Common myeloid progenitor, CD34-positive (primary cell): ENCODE measurements at regions of chr1 and their contacts with region 1.

Region 1: GRCh38 chr1:152459596-152460528 is 45.8 kb upstream of the CRNN start:
- DNase-seq: peak; percentile 80 to 86 (median 82)
- H3K4me3 ChIP-seq: peak overlapping the region in 4 of 7 experiments; percentile 5 to 63 (median 46)
- H3K27ac ChIP-seq: peak overlapping the region; percentile 40 to 58
- H3K4me1 ChIP-seq: peaks cover 0 to 8% (median 4%) of the 10 kb centered on the region in 4 experiments
- H3K27me3 ChIP-seq: no peaks in the 10 kb centered on the region

Region 2: GRCh38 chr1:152398812-152399698 is 60.8 kb before region 1 on chr1:
- CTCF ChIA-PET with region 1: interaction called, 26 read pairs
- POLR2A ChIA-PET with region 1: no interaction called
- DNase-seq: peak; percentile 11 to 42 (median 36)
- H3K4me3 ChIP-seq: no peak overlapping the region
- H3K27ac ChIP-seq: no peak overlapping the region
- H3K4me1 ChIP-seq: no peaks in the 10 kb centered on the region
- H3K27me3 ChIP-seq: peaks cover 0 to 4% (median 0%) of the 10 kb centered on the region in 5 experiments

Region 3: DNA sequence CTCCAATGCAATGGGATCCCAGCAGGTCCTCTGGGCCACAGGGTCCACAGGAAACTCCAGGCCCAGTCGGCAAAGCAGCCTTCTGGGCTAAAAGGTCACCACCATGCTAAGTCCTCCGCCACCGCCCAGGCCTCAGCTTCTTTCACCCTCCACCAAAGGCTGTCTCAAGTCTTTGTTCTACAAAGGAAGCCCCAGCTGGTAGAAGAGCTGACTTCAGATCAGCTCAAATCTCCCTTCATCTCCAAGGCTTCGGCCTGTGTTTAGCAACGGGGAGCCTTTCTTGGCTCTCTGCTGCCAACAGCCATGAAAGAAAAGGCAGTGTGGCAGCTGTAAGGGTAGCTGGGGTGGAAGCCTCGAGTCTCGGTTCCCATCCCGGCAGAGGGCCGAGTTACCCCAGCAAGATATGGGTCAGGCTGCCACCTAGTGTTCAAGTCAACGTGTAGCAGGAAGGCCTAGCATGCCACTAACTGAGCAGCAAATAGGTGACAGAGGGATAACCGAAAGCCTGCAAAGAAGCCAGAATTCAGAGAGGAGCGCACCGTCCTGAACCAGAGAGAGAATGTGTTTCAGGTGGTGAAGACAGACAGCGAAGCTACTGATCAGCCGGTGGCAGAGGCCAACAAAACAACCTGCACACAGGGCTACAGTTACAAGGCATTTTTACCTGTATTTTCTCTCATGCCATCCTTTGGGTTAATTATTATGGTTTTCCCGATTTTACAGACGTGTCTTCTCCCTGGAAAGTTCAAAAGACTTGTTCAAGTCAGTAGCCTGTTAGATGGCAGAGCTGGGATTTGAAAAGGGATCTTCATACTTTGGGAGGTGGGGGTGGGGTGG is 19.0 kb before region 1 on chr1:
- CTCF ChIA-PET with region 1: interaction called, 27 read pairs
- POLR2A ChIA-PET with region 1: no interaction called
- DNase-seq: peak; percentile 61 to 82 (median 79)
- H3K4me3 ChIP-seq: no peak overlapping the region
- H3K27ac ChIP-seq: no peak overlapping the region
- H3K4me1 ChIP-seq: peaks cover 0 to 1% (median 0%) of the 10 kb centered on the region in 4 experiments
- H3K27me3 ChIP-seq: peaks cover 0 to 7% (median 2%) of the 10 kb centered on the region in 5 experiments

Region 4: DNA sequence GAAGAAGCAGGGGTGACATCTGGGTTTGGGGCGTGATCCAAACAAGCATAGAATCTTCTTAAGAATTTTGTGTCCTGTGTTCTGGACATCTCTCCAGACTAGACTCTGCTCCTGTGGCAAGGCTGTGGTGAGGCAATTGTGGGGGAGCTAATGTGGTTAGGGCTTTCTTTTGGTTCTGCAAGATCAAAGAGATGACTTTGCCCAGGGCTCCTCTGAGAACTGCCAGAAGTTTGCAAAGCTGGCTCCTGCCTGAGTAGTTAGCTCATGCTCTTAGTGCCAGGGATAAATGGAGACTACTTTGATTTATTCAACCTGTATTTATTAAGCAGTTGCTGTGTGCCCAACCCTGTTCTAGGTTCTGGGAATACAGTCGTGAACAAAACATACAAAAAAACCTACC is 11.8 kb before region 1 on chr1:
- CTCF ChIA-PET with region 1: interaction called, 27 read pairs
- POLR2A ChIA-PET with region 1: no interaction called
- DNase-seq: no peak
- H3K4me3 ChIP-seq: no peak overlapping the region
- H3K27ac ChIP-seq: no peak overlapping the region
- H3K4me1 ChIP-seq: no peaks in the 10 kb centered on the region
- H3K27me3 ChIP-seq: peaks cover 0 to 3% (median 0%) of the 10 kb centered on the region in 5 experiments